GM23248 (cell line): ENCODE measurements at regions of chr13 and their contacts with region 1.

Region 1: DNA sequence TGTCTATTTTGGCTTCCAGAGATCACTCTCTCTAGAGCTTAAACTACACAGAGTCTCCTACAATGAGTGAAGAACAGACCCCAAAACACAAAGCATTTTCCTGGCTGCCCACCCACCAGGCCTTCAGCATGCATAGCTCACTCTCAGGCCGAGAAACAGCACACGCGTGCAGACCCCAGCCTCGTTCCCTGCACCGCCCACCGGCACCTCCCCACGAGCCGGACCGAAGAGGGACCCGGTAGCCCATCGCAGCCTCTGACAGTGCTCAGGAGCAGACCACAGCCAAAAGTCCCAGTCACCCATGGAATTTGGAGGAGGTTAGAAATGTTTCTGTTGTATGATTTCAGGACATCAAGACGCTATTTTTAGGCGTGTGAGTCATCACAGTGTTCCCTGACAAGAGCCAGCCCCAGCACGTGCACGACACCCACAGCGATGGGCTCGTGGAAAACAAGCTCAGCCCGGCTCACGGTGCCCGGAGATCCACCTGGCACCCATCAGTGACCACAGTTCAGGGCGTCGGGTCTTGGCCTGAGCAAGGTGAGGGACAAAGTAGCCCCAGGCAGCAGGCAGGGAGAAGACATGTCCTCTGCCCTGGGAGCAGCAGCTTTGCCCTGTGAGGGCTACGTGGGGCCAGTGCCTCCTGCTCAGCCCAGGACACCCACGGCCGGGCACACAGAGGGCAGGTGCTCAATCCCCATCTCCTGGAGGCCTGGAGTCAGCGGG is 50.1 kb upstream of the SPACA7 start:
- DNase-seq: peak; percentile 4
- H3K4me3 ChIP-seq: no peak overlapping the region
- H3K27ac ChIP-seq: no peak overlapping the region
- H3K4me1 ChIP-seq: no peaks in the 10 kb centered on the region
- H3K27me3 ChIP-seq: no peaks in the 10 kb centered on the region

Region 2: GRCh38 chr13:112270951-112271350 is 55.1 kb before region 1 on chr13:
- in situ Hi-C with region 1: loop called (anchors 10 kb)
- DNase-seq: no peak
- H3K4me3 ChIP-seq: no peak overlapping the region
- H3K27ac ChIP-seq: no peak overlapping the region
- H3K4me1 ChIP-seq: no peaks in the 10 kb centered on the region
- H3K27me3 ChIP-seq: no peaks in the 10 kb centered on the region

Region 3: GRCh38 chr13:112638157-112638750 is 312.2 kb after region 1 on chr13:
- in situ Hi-C with region 1: no loop called
- DNase-seq: no peak
- H3K4me3 ChIP-seq: no peak overlapping the region
- H3K27ac ChIP-seq: no peak overlapping the region
- H3K4me1 ChIP-seq: no peaks in the 10 kb centered on the region
- H3K27me3 ChIP-seq: peaks cover 48% of the 10 kb centered on the region

Region 4: DNA sequence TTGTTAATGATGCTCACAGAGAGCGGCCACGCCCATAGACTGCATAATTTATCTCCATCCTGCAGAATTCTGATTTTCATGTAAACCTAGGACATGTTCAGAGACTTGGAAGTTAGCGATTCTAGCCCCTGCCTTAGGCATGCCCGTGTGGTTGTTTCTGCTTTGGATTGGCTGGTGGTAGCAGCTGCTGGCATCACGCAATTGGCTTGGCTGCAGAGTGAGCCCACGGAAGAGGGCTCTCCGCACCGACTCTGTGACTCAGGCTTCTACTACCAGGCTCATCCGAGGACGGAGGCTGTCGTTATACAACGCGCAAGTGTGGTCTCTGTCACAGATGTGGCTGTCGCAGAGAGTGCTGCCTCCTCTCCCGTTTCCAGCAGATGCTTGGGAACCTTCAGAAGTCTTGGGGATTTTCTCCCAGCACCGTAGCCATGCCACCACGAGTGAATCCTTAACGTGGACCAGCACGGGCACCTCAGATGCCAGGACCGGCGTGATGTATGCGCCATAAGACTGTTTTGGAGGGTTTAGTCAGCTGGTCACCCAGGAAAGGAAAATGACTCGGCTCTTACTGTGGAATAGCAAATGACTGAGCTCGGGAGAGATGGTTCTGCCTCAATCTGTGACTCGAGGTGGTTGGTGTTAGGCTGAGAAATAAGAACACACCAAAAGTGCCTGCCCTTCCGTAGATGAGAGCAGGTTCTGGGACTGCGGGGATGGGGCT is 718.5 kb after region 1 on chr13:
- in situ Hi-C with region 1: no loop called
- DNase-seq: peak; percentile 69
- H3K4me3 ChIP-seq: peak overlapping the region; percentile 39
- H3K27ac ChIP-seq: no peak overlapping the region
- H3K4me1 ChIP-seq: no peaks in the 10 kb centered on the region
- H3K27me3 ChIP-seq: peaks cover 34% of the 10 kb centered on the region